Ovary (tissue), 10 donors: ENCODE measurements at regions of chr13 and their contacts with region 1.

Region 1: DNA sequence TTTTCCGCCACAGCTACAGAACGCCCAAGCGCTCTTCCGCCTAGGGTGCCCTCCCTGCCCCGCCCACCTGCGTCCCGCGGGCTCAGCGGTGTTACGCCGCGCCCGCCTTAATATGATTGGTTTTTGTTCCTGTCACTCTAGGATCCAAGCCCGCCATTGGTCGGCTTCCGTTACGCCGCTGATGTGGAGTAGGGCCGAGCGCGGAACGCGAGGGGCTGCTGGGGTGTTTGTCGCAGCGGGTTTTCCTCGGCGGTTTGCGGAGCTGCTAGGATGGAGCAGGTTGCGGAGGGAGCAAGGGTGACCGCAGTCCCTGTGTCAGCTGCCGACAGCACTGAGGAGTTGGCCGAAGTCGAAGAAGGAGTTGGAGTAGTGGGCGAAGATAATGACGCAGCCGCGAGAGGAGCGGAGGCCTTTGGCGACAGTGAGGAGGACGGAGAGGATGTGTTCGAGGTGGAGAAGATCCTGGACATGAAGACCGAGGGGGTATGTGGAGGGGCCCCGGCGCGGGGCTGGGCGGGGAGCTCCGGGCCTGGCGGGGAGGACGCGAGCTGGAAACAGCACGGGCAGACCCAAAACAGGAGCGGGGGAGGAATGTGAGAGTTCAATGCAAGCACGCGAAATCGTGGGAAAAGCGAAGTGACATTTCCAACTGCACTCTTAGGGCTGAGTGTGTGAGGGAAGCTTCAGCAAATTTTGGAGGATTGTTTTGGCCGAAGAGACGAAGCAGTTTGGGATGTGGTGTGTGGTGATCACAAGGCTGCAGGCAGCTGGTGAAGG is at the start of gene MPHOSPH8:
- DNase-seq: peak; percentile 94 to 95 (median 95)
- H3K4me3 ChIP-seq: peak within 1 kb of the TSS; percentile 92
- H3K27ac ChIP-seq: peak within 1 kb of the TSS; percentile 90 to 95
- H3K4me1 ChIP-seq: peaks cover 7% of the 10 kb centered on the region
- H3K27me3 ChIP-seq: no peaks in the 10 kb centered on the region
- CTCF ChIP-seq: no peak
- EP300 ChIP-seq: no peak
- POLR2A ChIP-seq: peak; percentile 82
- total RNA-seq, gene MPHOSPH8: 32.9 to 47.2 (median 38.3) TPM

Region 2: GRCh38 chr13:19681517-19681916 is 47.9 kb after region 1 on chr13:
- intact Hi-C with region 1: no loop called
- DNase-seq: no peak
- H3K4me3 ChIP-seq: no peak overlapping the region
- H3K27ac ChIP-seq: no peak overlapping the region
- H3K4me1 ChIP-seq: no peaks in the 10 kb centered on the region
- H3K27me3 ChIP-seq: no peaks in the 10 kb centered on the region
- CTCF ChIP-seq: no peak
- EP300 ChIP-seq: no peak
- POLR2A ChIP-seq: no peak

Region 3: DNA sequence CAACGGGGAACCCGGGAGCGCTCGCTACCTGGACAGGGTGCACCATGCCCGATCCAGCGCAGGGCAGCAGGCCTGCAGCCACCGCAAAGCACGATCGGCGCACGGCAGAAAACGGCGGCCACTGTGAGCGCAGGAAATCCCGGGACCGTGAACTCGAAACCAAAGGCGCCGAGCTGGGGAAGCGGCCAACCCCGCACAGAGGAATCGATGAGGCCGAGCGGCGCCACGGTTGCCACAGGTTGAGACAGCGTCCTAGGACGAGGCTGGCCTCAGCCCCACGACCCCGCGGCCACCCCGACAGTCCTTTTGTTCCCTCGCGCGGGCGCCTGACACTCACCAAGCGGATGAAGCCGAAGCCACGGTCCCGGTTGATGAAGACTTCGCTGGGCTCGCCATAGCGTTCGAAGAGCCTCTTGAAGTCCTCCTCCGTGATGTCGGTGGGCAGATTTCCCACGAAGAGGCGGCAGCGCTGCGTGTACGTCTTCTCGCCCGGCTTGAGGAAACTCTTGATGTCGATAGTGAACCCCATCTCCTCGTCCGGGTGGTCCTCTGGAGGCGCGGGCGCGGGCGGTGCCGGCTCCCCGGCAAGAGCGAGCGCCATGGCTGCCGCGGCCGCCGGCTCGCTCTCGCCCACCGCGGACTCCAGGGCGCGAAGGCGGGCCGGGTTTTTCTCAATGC is 148.5 kb after region 1 on chr13:
- intact Hi-C with region 1: loop called in 1 of 4 experiments (anchors 10 kb)
- DNase-seq: peak; percentile 29 to 71 (median 49)
- H3K4me3 ChIP-seq: peak overlapping the region; percentile 92
- H3K27ac ChIP-seq: peak overlapping the region; percentile 74 to 86
- H3K4me1 ChIP-seq: peaks cover 3% of the 10 kb centered on the region
- H3K27me3 ChIP-seq: no peaks in the 10 kb centered on the region
- CTCF ChIP-seq: no peak
- EP300 ChIP-seq: no peak
- POLR2A ChIP-seq: no peak

Region 4: GRCh38 chr13:19967621-19968020 is 334.0 kb after region 1 on chr13:
- intact Hi-C with region 1: no loop called
- DNase-seq: no peak
- H3K4me3 ChIP-seq: no peak overlapping the region
- H3K27ac ChIP-seq: no peak overlapping the region
- H3K4me1 ChIP-seq: peaks cover 10% of the 10 kb centered on the region
- H3K27me3 ChIP-seq: no peaks in the 10 kb centered on the region
- CTCF ChIP-seq: no peak
- EP300 ChIP-seq: no peak
- POLR2A ChIP-seq: no peak